ENCODE measurements at regions of chr16 and their contacts with region 1.

Region 1: GRCh38 chr16:96935-97381 is 18.9 kb downstream of the MPG start:
- DNase-seq: peak; percentile 97
- H3K4me3 ChIP-seq: no peak overlapping the region
- H3K27ac ChIP-seq: no peak overlapping the region
- H3K4me1 ChIP-seq: peaks cover 3 to 28% (median 18%) of the 10 kb centered on the region in 6 donors
- H3K27me3 ChIP-seq: no peaks in the 10 kb centered on the region
- CTCF ChIP-seq: peak; percentile 96 to 100 (median 99)
- POLR2A ChIP-seq: no peak

Region 2: DNA sequence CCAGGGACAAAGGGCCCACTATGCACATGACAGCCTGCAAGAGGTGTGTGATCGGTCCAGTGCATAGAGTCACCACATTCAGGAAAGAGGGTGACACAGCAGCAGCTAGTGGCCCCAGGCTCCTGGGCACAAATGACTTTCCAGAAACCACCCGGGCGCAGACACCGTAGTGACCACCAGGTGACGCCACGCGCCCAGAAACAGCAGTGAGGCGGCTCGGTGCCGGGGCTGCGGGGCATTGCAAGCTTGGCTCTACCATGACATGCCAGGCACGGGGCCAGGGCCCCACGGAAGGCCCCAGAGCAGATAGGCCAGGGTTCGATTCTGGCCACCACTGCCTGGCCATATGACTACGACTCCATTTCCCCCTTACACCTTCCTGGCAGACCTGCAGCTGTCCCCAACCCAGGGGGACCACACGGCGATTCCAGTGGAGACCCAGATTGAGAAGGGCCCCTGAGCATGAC is 31.3 kb before region 1 on chr16:
- intact Hi-C with region 1: loop called (anchors 2 kb)
- DNase-seq: peak; percentile 95
- H3K4me3 ChIP-seq: no peak overlapping the region
- H3K27ac ChIP-seq: no peak overlapping the region
- H3K4me1 ChIP-seq: peaks cover 0 to 47% (median 17%) of the 10 kb centered on the region in 6 donors
- H3K27me3 ChIP-seq: peaks cover 0 to 4% (median 0%) of the 10 kb centered on the region in 7 donors
- CTCF ChIP-seq: peak; percentile 82 to 97 (median 93)
- POLR2A ChIP-seq: no peak

Region 3: DNA sequence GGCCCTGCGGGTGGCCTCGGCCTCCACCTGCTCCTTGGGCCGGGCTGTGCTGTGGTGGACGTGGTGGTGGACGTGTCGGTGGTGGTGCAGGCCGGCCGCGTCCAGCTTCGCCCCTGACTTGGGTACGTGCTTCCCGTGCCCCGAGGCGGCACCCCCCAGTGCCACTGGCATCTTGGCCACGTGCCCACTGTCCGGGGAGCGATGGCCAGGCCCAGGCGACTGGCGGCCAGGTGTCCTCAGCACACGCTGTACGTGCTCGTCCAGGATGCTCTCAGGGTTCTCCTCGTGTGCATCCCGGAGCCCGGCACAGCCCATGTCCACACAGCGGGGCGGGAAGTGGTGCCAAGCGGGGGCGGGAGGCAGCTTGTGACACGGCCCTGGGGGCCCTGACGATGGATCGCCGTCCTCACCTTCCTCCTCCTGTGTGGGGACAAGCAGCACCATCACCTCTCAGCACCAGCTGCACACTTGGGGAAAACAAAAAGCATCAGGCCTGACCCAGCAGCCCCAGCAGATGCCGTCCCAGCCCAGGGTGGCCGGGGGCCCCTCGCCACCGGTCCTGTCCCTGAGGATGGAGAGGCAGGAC is 201.0 kb after region 1 on chr16:
- intact Hi-C with region 1: no loop called
- DNase-seq: no peak
- H3K4me3 ChIP-seq: no peak overlapping the region
- H3K27ac ChIP-seq: no peak overlapping the region
- H3K4me1 ChIP-seq: no peaks in the 10 kb centered on the region
- H3K27me3 ChIP-seq: no peaks in the 10 kb centered on the region
- CTCF ChIP-seq: no peak
- POLR2A ChIP-seq: no peak